Aorta (tissue), 5 donors: ENCODE measurements at regions of chr18 and their contacts with region 1.

Region 1: DNA sequence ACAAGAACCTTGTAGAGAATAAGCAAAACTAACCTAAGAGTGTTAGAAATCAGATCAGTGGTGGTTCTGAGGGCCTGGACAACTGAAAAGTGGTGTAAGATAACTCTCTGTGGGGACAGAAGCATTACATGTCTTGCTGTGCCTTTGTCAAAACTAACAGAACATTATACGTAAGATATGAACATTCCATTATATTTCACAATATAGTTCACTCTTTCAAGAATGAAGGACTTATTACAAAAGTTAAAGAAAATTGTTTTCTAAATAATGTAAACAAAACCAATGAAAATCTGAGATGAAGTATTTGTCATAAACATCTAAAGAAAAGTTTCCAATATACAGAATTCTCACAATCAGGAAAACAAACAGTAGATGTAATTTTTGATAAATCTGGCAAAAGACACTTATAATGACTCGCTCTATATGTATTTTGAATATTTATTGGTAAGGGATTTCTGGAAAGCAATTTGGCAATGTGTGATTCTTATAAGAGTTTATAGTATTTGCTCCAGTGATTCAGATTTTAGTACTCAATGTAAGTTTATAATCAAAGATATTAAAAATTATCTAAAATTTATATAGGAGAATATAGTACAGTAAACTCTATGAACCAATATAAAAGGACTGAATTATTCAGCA is 258.4 kb downstream of the CD226 start:
- DNase-seq: no peak
- ATAC-seq: no peak
- H3K4me3 ChIP-seq: no peak overlapping the region
- H3K27ac ChIP-seq: no peak overlapping the region
- H3K4me1 ChIP-seq: peaks cover 0 to 1% of the 10 kb centered on the region in 2 donors
- H3K27me3 ChIP-seq: no peaks in the 10 kb centered on the region

Region 2: GRCh38 chr18:69747388-69747787 is 58.1 kb after region 1 on chr18:
- intact Hi-C with region 1: loop called in 1 of 2 experiments (anchors 10 kb)
- DNase-seq: no peak
- ATAC-seq: no peak
- H3K4me3 ChIP-seq: no peak overlapping the region
- H3K27ac ChIP-seq: no peak overlapping the region
- H3K4me1 ChIP-seq: no peaks in the 10 kb centered on the region
- H3K27me3 ChIP-seq: no peaks in the 10 kb centered on the region